ENCODE measurements at regions of chr2 and their contacts with region 1.

Region 1: GRCh38 chr2:149017116-149017985 is 21.1 kb upstream of the LYPD6B start:
- DNase-seq: no peak
- ATAC-seq: peak; percentile 39

Region 2: GRCh38 chr2:148948868-148949267 is 68.5 kb before region 1 on chr2:
- intact Hi-C with region 1: no loop called
- DNase-seq: no peak
- ATAC-seq: no peak

Region 3: GRCh38 chr2:149313512-149313972 is 296.2 kb after region 1 on chr2:
- intact Hi-C with region 1: loop called (anchors 10 kb)
- DNase-seq: no peak
- ATAC-seq: peak; percentile 37

Region 4: DNA sequence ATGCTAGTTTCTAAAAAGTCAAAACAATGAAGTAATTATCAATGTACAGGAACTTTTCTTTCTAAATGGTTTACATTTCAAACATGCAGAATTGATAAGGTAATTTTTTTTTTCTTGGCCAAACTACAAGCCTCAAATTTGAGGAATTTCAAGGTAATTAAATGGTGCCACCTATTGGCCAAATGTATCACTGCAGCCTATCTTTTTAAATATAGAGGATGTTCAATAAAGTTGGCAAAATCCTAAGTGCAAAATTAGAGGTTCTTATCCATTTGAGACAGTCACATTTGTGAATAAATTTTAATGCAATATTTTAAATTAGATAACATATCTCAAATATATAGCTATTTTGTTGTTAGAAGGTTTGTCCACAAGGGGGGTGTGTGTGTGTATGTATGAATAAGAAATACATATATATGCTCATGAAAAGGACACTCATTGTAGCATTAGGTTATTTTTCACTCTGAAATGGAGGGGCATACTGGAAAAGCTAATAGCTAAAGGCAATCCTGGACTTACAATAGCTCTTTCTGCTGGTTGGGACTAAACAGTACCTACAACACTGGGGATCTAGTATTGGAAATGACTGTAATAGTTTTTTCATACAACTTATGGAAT is 544.1 kb after region 1 on chr2:
- intact Hi-C with region 1: loop called (anchors 1 kb)
- DNase-seq: no peak
- ATAC-seq: no peak

Measured in Right ventricle myocardium inferior (tissue), 1 donor.